ENCODE measurements at regions of chr20 and their contacts with region 1.

Region 1: DNA sequence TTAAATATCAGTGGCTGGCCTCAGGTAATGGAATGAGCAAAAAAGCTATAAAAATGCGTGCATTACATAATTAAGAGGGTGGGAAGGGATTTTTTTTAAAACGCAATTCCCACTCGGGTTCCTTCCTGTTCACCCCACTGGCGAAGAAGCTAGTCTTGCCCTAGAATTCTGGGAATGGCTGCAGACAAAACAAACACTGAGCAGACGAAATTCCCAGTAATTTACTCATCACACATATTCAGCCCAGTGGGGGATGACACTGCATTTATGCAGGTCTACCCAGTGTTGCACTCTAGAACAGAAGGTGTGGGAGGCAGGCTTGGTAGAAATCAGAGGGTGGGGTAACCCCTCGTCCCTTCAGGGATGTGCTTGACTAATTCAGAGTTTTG is 2695.0 kb upstream of the DEFB115 start:
- DNase-seq: no peak
- H3K4me3 ChIP-seq: no peak overlapping the region
- H3K27ac ChIP-seq: no peak overlapping the region
- H3K4me1 ChIP-seq: no peaks in the 10 kb centered on the region
- H3K27me3 ChIP-seq: no peaks in the 10 kb centered on the region
- CTCF ChIP-seq: no peak
- EP300 ChIP-seq: no peak
- POLR2A ChIP-seq: no peak

Region 2: GRCh38 chr20:29123861-29124260 is 561.4 kb after region 1 on chr20:
- in situ Hi-C with region 1: loop called in 1 of 4 experiments (anchors 25 kb)
- intact Hi-C with region 1: no loop called
- DNase-seq: no peak
- H3K4me3 ChIP-seq: no peak overlapping the region
- H3K27ac ChIP-seq: no peak overlapping the region
- H3K4me1 ChIP-seq: no peaks in the 10 kb centered on the region
- H3K27me3 ChIP-seq: no peaks in the 10 kb centered on the region
- CTCF ChIP-seq: no peak
- EP300 ChIP-seq: no peak
- POLR2A ChIP-seq: no peak

Region 3: DNA sequence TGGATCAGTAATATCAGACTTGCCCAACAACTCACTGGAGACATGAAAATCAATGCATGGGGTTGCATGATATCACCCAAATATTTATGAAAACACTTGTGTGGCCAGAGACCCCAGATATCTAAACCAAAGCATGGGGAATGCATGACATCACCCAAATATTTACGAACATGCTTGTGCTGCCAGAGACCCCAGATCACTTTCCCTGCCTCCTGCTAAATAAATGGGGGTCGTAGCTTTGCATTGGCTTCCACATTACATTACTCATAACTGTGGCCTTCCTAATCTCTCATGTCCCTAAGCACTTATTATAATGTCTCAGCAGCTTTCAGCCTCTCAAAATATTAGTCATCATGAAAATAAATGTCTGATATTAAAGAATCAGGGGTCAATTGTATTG is 1857.0 kb after region 1 on chr20:
- in situ Hi-C with region 1: loop called in 1 of 4 experiments (anchors 25 kb)
- intact Hi-C with region 1: no loop called
- DNase-seq: no peak
- H3K4me3 ChIP-seq: no peak overlapping the region
- H3K27ac ChIP-seq: no peak overlapping the region
- H3K4me1 ChIP-seq: no peaks in the 10 kb centered on the region
- H3K27me3 ChIP-seq: no peaks in the 10 kb centered on the region
- CTCF ChIP-seq: no peak
- EP300 ChIP-seq: no peak
- POLR2A ChIP-seq: no peak